BJ (cell line): ENCODE measurements at regions of chr4 and their contacts with region 1.

Region 1: DNA sequence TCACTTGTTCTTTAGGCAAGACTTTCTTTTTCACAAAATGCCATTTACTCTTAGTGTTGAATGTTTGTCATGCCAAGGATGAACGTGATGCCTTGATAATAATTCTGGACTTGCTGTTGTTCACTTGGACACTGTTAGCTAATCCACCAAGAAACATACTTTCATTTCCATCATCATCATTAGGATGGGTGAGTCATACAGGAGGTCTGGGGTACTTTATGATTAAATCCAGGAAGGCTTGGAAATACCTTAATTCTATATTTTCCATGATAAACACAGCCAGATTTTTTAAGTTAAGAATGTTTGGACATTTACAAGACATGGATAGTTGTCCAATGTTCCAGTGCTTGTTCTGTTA is 260.7 kb upstream of the GIMD1 start:
- DNase-seq: no peak
- H3K4me3 ChIP-seq: no peak overlapping the region
- H3K27me3 ChIP-seq: no peaks in the 10 kb centered on the region
- CTCF ChIP-seq: no peak

Region 2: DNA sequence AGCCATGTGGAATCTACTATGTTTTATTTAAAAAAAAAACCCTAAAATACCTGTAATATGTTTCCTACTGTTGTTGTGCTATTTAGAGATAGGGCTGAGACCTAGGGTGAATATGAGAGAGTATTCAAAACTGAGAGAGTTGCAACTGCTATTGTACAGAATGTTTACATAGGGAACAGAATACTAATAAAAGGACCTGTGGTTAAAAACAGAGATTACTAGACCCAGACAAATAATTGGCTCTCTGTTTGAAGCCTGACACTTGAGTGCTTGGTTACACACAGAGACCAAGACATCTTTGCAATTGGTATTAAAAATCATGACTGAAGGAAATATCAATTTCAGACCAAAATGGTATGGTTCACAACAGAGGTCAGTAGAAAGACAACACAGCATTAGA is 18.2 kb after region 1 on chr4:
- CTCF ChIA-PET with region 1: no interaction called
- POLR2A ChIA-PET with region 1: no interaction called
- DNase-seq: no peak
- H3K4me3 ChIP-seq: no peak overlapping the region
- H3K27me3 ChIP-seq: no peaks in the 10 kb centered on the region
- CTCF ChIP-seq: no peak

Region 3: GRCh38 chr4:106671716-106672115 is 42.5 kb after region 1 on chr4:
- CTCF ChIA-PET with region 1: no interaction called
- POLR2A ChIA-PET with region 1: interaction called, 10 read pairs
- DNase-seq: no peak
- H3K4me3 ChIP-seq: no peak overlapping the region
- H3K27me3 ChIP-seq: no peaks in the 10 kb centered on the region
- CTCF ChIP-seq: no peak

Region 4: GRCh38 chr4:106766519-106766918 is 137.3 kb after region 1 on chr4:
- CTCF ChIA-PET with region 1: no interaction called
- POLR2A ChIA-PET with region 1: no interaction called
- DNase-seq: peak; percentile 31
- H3K4me3 ChIP-seq: no peak overlapping the region
- H3K27me3 ChIP-seq: no peaks in the 10 kb centered on the region
- CTCF ChIP-seq: no peak